Tibial artery (tissue), 4 donors: ENCODE measurements at regions of chr16 and their contacts with region 1.

Region 1: GRCh38 chr16:74309789-74310781 is 13.5 kb downstream of the PSMD7 start:
- DNase-seq: no peak
- H3K4me3 ChIP-seq: no peak overlapping the region
- H3K27ac ChIP-seq: no peak overlapping the region
- H3K4me1 ChIP-seq: no peaks in the 10 kb centered on the region
- H3K27me3 ChIP-seq: no peaks in the 10 kb centered on the region
- CTCF ChIP-seq: peak; percentile 45 to 59

Region 2: GRCh38 chr16:74438492-74439041 is 128.5 kb after region 1 on chr16:
- intact Hi-C with region 1: loop called (anchors 10 kb)
- DNase-seq: no peak
- H3K4me3 ChIP-seq: no peak overlapping the region
- H3K27ac ChIP-seq: no peak overlapping the region
- H3K4me1 ChIP-seq: no peaks in the 10 kb centered on the region
- H3K27me3 ChIP-seq: no peaks in the 10 kb centered on the region
- CTCF ChIP-seq: no peak